ENCODE measurements at regions of chr6 and their contacts with region 1.

Region 1: DNA sequence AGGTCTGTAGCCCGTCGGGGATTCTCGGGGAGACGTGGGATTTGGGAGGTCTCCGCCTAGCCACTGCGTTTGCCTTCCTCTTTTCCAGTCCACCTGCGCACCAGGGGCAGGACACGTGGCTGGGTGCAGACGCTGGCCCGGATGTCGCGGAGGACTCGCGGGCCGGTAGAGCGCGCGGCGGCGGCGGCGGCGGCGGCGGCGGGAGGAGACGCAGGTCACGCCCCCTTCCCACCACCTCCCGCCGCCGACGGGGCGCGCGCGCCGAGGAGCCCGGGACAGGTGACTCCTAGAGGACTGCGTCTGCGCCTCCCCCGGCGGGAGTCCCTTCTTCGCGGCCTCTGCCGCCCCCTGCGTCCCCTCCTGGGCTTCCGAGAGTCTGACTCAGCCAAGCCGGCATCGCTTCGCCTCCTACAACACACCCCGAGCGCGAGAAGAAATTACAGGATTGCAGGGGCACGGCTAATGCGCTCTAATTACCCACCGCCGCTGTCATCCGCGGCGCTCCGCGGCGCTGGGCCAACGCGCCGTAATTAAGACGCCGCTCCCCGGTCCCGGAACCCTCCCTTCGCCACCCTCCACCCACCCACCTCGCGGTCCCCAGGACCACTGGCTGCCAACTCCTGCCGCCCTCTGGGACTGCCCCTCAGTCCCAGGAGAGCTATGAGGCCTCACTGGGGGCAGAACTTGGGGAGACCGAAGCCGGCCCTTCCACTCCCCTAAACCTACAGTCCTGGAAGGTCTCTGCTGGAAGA is 124.5 kb downstream of the MRPL14 start:
- DNase-seq: no peak
- ATAC-seq: peak; percentile 40
- H3K4me3 ChIP-seq: peak overlapping the region; percentile 58 to 64
- H3K27ac ChIP-seq: peak overlapping the region; percentile 89
- H3K4me1 ChIP-seq: peaks cover 35 to 66% of the 10 kb centered on the region in 2 experiments
- H3K27me3 ChIP-seq: no peaks in the 10 kb centered on the region
- CTCF ChIP-seq: 0 out of 6 replicates have a peak, but pooled peaks of 1 of the 3 experiments have one; percentile 9
- POLR2A ChIP-seq: no peak
- RAD21 ChIP-seq: no peak

Region 2: DNA sequence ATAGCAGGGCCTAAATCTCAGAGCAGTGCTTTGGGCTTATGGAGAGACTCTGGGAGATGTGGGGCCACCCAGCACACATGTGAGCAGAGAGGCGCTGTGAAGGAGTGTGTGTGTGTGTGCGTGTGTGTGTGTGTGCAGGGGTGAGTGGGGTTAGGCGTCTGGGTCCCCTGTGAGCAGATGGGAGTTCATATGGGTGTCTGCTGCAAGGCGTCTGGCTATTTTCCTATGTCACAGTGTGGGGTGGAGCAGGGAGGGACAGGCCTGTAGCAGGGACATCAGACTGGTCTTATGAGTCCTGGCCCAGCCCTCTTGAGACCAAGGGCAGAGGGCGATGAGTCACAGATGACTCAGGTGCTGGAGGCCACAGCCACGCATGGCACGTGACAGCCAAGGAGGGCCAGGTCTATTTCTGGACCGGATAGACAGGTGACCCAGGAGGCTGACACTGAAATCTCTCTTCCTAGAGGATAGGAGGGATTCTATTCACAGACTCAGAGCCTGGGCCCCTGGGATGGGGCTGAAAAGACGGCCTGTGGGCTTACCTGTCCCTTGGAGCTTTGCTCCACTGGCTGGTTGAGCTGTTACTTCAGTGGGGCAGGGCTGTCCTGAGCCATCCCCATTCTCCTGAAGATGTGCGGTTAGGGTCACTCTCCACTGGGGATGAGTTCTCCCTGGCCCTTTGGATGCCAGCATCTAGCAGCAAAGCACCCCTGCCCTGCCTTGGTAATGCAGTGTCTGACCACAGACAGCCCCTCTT is 203.9 kb before region 1 on chr6:
- CTCF ChIA-PET with region 1: no interaction called
- POLR2A ChIA-PET with region 1: no interaction called
- RAD21 ChIA-PET with region 1: no interaction called
- intact Hi-C with region 1: no loop called
- DNase-seq: peak; percentile 92
- ATAC-seq: peak; percentile 95
- H3K4me3 ChIP-seq: peak overlapping the region; percentile 10 to 44
- H3K27ac ChIP-seq: peak overlapping the region; percentile 56
- H3K4me1 ChIP-seq: peaks cover 29 to 45% of the 10 kb centered on the region in 2 experiments
- H3K27me3 ChIP-seq: no peaks in the 10 kb centered on the region
- CTCF ChIP-seq: no peak
- POLR2A ChIP-seq: no peak
- RAD21 ChIP-seq: no peak

Region 3: DNA sequence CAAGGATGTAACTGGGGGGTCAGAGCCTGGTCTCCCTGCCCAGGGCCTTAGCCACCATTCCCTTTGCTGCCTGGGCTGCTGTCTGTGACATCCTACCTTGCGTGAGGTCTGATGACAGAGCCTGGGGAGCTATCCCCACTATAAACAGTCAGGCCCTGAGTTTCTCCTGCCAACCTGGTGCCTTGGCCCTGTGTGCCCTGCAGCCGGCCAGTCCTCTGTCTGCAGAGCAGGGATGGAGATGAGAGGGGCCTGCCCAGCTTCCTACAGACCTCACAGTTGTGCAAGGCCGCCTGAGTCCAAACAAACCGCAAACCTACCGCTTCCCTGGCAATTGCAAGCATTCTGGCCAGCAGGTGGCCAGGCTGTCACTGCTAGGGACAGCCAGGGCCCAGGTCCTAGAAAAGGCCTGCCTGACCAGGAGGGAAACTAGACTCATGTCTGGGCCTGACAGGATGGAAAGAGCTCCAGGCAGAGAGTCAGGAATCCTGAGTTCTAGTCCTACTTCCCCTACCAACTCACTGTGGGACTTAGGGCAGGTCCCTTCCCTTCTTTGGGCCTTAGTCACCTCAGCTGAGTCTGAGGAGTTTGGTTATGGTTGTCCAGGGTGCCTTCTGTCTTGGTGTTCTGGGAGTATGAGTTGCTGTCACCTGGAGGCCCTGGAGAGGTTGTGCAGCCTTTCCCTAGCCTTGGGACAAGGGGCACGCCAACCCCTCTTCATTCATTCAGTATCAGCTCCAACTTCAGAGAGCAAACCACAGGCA is 146.6 kb before region 1 on chr6:
- CTCF ChIA-PET with region 1: no interaction called
- POLR2A ChIA-PET with region 1: no interaction called
- RAD21 ChIA-PET with region 1: no interaction called
- intact Hi-C with region 1: loop called (anchors 10 kb)
- DNase-seq: peak; percentile 21
- ATAC-seq: peak; percentile 80
- H3K4me3 ChIP-seq: no peak overlapping the region
- H3K27ac ChIP-seq: no peak overlapping the region
- H3K4me1 ChIP-seq: no peaks in the 10 kb centered on the region
- H3K27me3 ChIP-seq: no peaks in the 10 kb centered on the region; the same call in 1 of the 2 replicates
- CTCF ChIP-seq: peak; percentile 56 to 71 (median 70); a peak in 5 of 6 replicates
- POLR2A ChIP-seq: no peak
- RAD21 ChIP-seq: peak; percentile 66

Region 4: DNA sequence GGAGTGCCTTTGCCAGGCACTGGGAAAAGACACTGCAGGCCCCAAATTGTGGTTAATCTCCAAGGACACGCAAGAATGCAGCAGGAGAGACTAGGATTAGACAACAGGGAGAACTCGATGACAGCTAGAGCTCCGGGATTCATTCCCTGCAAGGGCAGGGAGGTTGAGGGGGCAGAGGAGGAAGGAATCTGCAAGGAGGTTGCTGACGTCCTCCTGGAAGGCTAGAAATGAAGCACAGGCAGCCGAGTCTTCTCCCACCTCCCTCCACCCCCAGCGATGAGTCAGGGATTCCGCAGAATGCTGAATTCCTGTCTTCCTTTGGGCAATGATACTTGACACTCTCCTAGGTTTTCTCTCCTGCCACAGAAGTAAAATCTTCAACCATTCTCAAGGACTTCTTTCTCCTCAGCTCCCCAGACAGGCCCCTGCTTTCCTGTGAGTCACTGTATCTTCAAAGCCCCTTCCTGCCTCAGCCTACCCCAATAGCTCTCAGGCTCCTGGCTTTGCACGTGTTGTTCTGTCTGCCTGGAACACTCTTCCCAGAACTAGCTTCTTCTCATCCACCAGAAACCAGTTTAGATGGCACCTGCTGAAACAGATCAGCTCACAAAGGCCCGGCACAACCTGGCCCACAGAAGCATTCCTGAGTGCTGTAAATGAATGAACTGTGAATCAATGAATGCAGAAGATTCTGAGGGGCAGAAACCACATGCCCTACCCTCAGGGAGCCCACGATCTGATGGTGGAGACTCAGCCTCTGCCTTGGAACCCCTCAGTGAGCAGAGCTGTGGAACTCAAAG is 38.9 kb after region 1 on chr6:
- CTCF ChIA-PET with region 1: no interaction called
- POLR2A ChIA-PET with region 1: interaction called, 6 read pairs
- RAD21 ChIA-PET with region 1: interaction called in 1 of 2 experiments, 5 read pairs
- intact Hi-C with region 1: loop called (anchors 5 kb)
- DNase-seq: peak; percentile 84
- ATAC-seq: peak; percentile 74
- H3K4me3 ChIP-seq: peak overlapping the region in 1 of 2 experiments; percentile 42; a peak in 3 of 4 replicates
- H3K27ac ChIP-seq: peak overlapping the region; percentile 95
- H3K4me1 ChIP-seq: peaks cover 47 to 75% of the 10 kb centered on the region in 2 experiments
- H3K27me3 ChIP-seq: no peaks in the 10 kb centered on the region
- CTCF ChIP-seq: no peak
- POLR2A ChIP-seq: peak; percentile 27
- RAD21 ChIP-seq: no peak

Region 5: DNA sequence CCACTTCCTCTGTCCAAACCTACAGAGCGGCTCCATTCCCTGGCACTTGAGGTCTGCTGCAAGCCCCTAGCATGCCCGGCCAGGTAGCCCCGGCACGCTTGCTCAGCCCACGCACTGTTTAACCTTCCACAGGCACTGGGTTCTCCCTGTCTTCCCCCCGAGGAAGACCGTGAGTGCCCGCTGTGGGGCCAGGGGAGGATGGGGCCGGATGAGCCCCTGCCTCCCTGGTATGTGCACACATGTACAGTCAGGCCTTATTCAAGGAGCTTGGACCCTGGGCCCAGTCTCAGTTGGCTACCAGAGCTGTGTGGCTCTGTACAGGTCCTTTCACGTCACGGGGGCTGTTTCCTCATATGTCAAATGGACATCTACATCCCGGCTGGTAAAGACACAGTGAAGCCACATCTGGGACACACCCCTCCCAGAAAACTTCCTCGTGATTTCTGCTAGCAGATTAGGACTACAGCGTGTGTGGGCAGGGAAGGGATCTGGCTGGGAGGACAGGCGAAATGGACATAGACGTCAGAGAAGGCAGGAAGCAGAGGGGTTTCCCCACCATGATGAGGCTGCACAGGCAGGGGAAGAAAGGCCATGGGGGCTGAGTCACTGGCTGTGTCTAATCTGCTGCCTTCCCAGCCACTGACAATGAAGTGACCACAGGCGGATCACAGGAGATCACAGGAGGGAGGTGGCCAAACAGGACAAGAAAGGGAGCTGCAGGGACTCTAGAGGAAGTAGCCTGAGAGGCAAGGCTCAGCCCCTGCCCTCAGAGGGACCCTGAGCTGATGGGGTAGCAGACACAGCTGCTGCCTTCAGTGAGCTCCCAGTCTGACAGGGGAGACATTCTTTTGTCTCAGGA is 61.5 kb after region 1 on chr6:
- CTCF ChIA-PET with region 1: interaction called, 23 read pairs
- POLR2A ChIA-PET with region 1: interaction called, 5 read pairs
- RAD21 ChIA-PET with region 1: no interaction called
- intact Hi-C with region 1: no loop called
- DNase-seq: no peak
- ATAC-seq: peak; percentile 54
- H3K4me3 ChIP-seq: no peak overlapping the region
- H3K27ac ChIP-seq: no peak overlapping the region
- H3K4me1 ChIP-seq: peaks cover 0 to 38% of the 10 kb centered on the region in 2 experiments; a peak in 2 of 4 replicates
- H3K27me3 ChIP-seq: no peaks in the 10 kb centered on the region
- CTCF ChIP-seq: no peak
- POLR2A ChIP-seq: no peak
- RAD21 ChIP-seq: no peak